Naive thymus-derived CD4-positive, alpha-beta T cell (primary cell): ENCODE measurements at regions of chr6 and their contacts with region 1.

Region 1: DNA sequence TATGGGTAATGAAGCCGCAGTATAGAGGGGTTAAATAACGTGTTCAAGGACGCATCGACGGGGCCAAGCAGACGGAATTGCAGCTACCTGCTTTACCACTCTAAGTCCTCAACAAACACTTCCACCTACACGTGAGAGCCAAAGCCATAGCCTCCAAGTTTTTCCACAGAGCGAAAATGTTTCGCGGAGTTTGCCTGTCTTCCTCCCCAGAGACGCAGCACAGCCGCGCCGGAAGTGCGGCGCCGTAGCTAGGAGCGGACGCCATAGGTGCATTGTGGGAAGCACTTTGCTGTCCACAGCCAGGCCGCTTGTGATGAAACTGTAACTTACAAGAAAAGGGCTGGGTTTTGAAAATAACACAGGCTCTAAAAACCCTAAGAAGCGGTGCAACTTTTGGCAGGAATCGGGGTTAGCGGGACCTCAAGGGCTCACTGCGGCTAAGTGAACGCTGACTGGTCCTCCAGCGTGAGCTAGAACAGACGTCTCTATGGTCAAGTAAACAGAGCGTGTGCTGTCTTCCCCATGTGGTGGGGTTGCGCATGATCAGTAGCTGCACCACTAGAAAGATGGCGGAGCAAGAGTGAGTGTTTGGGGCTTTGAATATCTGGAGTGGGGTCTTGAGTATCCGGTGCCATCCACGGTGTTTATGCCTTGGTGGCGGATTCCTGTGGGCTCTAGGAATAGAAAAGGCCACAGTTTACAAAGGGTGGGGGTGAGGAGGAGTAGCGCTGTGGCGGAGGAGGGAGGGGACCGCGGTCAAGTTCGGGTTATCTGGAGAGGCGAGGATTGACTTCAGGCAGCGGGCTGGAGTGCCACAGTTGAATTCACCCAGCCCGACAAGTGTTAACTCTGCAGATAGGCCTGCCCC is at the start of gene RPL7L1:
- DNase-seq: peak; percentile 70 to 93 (median 88)
- ATAC-seq: peak; percentile 95
- H3K4me3 ChIP-seq: peak within 1 kb of the TSS; percentile 82
- H3K4me3 Mint-ChIP-seq: peak within 1 kb of the TSS; percentile 93 to 99 (median 96)
- H3K27ac ChIP-seq: peak within 1 kb of the TSS; percentile 89
- H3K27ac Mint-ChIP-seq: peak within 1 kb of the TSS; percentile 98 to 100 (median 99)
- H3K4me1 ChIP-seq: peaks cover 5 to 7% of the 10 kb centered on the region in 2 donors
- H3K4me1 Mint-ChIP-seq: peaks cover 7 to 40% (median 29%) of the 10 kb centered on the region in 7 donors
- H3K27me3 ChIP-seq: no peaks in the 10 kb centered on the region
- H3K27me3 Mint-ChIP-seq: no peaks in the 10 kb centered on the region
- total RNA-seq, gene RPL7L1: 65.6 to 91.7 (median 78.1) TPM

Region 2: GRCh38 chr6:42118162-42119001 is 761.2 kb before region 1 on chr6:
- CTCF ChIA-PET with region 1: no interaction called
- POLR2A ChIA-PET with region 1: no interaction called
- intact Hi-C with region 1: no loop called
- DNase-seq: no peak
- ATAC-seq: no peak
- H3K4me3 ChIP-seq: no peak overlapping the region
- H3K4me3 Mint-ChIP-seq: no peak overlapping the region
- H3K27ac ChIP-seq: no peak overlapping the region
- H3K27ac Mint-ChIP-seq: no peak overlapping the region
- H3K4me1 ChIP-seq: no peaks in the 10 kb centered on the region
- H3K4me1 Mint-ChIP-seq: peaks cover 0 to 2% (median 0%) of the 10 kb centered on the region in 7 donors
- H3K27me3 ChIP-seq: no peaks in the 10 kb centered on the region
- H3K27me3 Mint-ChIP-seq: peaks cover 4 to 10% (median 6%) of the 10 kb centered on the region in 5 donors

Region 3: DNA sequence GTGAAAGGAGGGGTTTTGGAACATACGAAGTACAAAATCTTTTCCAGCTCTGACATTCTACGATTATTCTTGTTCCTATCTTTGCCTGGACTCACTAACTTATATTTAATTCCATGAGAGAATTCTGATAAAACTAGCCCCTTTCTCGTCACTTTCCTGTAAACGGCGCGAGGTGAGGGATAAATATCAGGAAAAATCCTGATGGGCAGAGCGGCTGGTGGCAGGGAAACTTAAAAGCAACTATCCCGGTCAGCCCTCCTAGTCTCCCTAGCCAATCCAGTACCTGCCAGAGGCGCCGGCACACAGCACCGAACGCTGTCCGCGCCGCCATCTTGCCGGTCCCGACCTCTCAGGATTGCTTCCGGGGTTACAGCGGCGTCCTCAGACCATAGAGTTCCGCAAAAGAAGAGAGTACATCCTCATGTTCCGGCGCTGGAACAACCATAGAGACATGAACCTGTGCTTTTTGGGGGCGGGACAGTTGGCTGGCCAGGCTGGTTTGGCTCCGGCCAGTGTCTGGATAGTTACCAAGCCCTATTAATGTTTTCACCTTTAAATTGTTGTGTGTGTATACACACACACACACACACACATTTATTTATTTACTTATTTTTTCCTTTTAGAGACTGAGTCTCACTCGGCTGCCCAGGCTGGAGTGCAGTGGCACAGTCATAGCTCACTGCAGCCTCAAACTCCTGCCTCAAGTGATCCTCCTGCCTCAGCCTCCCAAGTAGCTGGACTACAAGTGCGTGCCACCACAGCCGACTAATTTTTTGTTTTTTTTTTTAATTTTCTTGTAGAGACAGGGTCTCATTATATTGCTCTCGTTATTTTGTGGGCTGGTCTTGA is 661.9 kb before region 1 on chr6 and contains the start of gene MRPS10:
- CTCF ChIA-PET with region 1: no interaction called
- POLR2A ChIA-PET with region 1: no interaction called
- intact Hi-C with region 1: loop called in 1 of 2 experiments (anchors 1 kb)
- DNase-seq: peak; percentile 72 to 92 (median 87)
- ATAC-seq: peak; percentile 100
- H3K4me3 ChIP-seq: peak within 1 kb of the TSS; percentile 96
- H3K4me3 Mint-ChIP-seq: peak within 1 kb of the TSS; percentile 92 to 100 (median 98)
- H3K27ac ChIP-seq: peak within 1 kb of the TSS; percentile 77
- H3K27ac Mint-ChIP-seq: peak within 1 kb of the TSS; percentile 87 to 99 (median 97)
- H3K4me1 ChIP-seq: peaks cover 9 to 14% of the 10 kb centered on the region in 2 donors
- H3K4me1 Mint-ChIP-seq: peaks cover 7 to 34% (median 24%) of the 10 kb centered on the region in 7 donors
- H3K27me3 ChIP-seq: no peaks in the 10 kb centered on the region
- H3K27me3 Mint-ChIP-seq: no peaks in the 10 kb centered on the region
- total RNA-seq, gene MRPS10: 17.0 to 30.3 (median 25.3) TPM

Region 4: DNA sequence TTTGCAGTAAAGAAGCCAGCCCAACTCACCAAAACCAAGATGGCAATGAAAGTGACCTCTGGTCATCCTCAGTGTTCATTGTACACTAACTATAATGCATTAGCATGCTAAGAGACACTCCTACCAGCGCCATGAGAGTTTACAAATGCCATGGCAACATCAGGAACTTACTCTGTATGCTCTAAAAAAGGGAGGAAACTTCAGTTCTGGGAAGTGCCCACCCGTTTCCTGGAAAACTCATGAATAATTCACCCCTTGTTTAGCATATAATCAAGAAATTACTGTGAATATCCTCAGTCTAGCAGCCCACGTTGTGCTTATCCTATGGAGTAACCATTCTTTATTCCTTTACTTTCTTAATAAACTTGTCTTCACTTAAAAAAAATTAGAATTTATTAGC is 408.5 kb before region 1 on chr6:
- CTCF ChIA-PET with region 1: no interaction called
- POLR2A ChIA-PET with region 1: no interaction called
- intact Hi-C with region 1: no loop called
- DNase-seq: no peak
- ATAC-seq: no peak
- H3K4me3 ChIP-seq: no peak overlapping the region
- H3K4me3 Mint-ChIP-seq: no peak overlapping the region
- H3K27ac ChIP-seq: no peak overlapping the region
- H3K27ac Mint-ChIP-seq: peak overlapping the region in 1 of 9 donors; percentile 21
- H3K4me1 ChIP-seq: no peaks in the 10 kb centered on the region
- H3K4me1 Mint-ChIP-seq: peaks cover 0 to 10% (median 0%) of the 10 kb centered on the region in 7 donors
- H3K27me3 ChIP-seq: no peaks in the 10 kb centered on the region
- H3K27me3 Mint-ChIP-seq: peaks cover 0 to 6% (median 0%) of the 10 kb centered on the region in 5 donors

Region 5: GRCh38 chr6:42692137-42692911 is 187.3 kb before region 1 on chr6:
- CTCF ChIA-PET with region 1: no interaction called
- POLR2A ChIA-PET with region 1: interaction called, 9 read pairs
- intact Hi-C with region 1: loop called in 1 of 2 experiments (anchors 1 kb)
- DNase-seq: no peak
- ATAC-seq: no peak
- H3K4me3 ChIP-seq: no peak overlapping the region
- H3K4me3 Mint-ChIP-seq: no peak overlapping the region
- H3K27ac ChIP-seq: no peak overlapping the region
- H3K27ac Mint-ChIP-seq: peak overlapping the region; percentile 39 to 87 (median 77)
- H3K4me1 ChIP-seq: peaks cover 10 to 16% of the 10 kb centered on the region in 2 donors
- H3K4me1 Mint-ChIP-seq: peaks cover 19 to 60% (median 40%) of the 10 kb centered on the region in 7 donors
- H3K27me3 ChIP-seq: no peaks in the 10 kb centered on the region
- H3K27me3 Mint-ChIP-seq: no peaks in the 10 kb centered on the region

Region 6: DNA sequence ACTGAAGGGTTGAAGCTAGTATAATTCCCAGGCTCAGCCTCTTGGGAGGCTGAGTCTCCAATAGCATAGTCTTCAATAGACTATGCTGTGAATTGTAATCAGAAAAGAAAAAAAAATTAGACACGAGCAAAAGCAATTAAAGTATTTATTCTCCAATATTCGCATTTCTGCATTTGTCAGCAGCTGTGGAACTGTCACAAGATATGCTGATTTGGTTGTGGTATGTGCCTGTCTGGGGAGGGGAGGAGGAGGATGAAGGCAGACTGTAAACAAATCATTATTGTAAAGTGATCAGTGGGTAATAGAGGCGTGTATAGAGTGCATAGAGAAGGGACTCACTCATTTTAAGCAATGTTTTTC is 107.9 kb before region 1 on chr6:
- CTCF ChIA-PET with region 1: no interaction called
- POLR2A ChIA-PET with region 1: interaction called, 49 read pairs
- intact Hi-C with region 1: loop called (anchors 1 kb)
- DNase-seq: peak in 1 of 9 donors; percentile 63
- ATAC-seq: peak; percentile 35
- H3K4me3 ChIP-seq: peak overlapping the region; percentile 50
- H3K4me3 Mint-ChIP-seq: peak overlapping the region; percentile 67 to 91 (median 84)
- H3K27ac ChIP-seq: peak overlapping the region; percentile 91
- H3K27ac Mint-ChIP-seq: peak overlapping the region; percentile 99 to 100 (median 100)
- H3K4me1 ChIP-seq: peaks cover 67 to 72% of the 10 kb centered on the region in 2 donors
- H3K4me1 Mint-ChIP-seq: peaks cover 49 to 86% (median 75%) of the 10 kb centered on the region in 7 donors
- H3K27me3 ChIP-seq: no peaks in the 10 kb centered on the region
- H3K27me3 Mint-ChIP-seq: no peaks in the 10 kb centered on the region

Region 7: GRCh38 chr6:42890311-42891198 is 10.9 kb after region 1 on chr6:
- CTCF ChIA-PET with region 1: interaction called, 6 read pairs
- POLR2A ChIA-PET with region 1: interaction called, 101 read pairs
- intact Hi-C with region 1: loop called (anchors 1 kb)
- DNase-seq: peak; percentile 70 to 90 (median 87)
- ATAC-seq: peak; percentile 99
- H3K4me3 ChIP-seq: peak overlapping the region; percentile 89
- H3K4me3 Mint-ChIP-seq: peak overlapping the region; percentile 94 to 100 (median 98)
- H3K27ac ChIP-seq: peak overlapping the region; percentile 87
- H3K27ac Mint-ChIP-seq: peak overlapping the region; percentile 89 to 99 (median 98)
- H3K4me1 ChIP-seq: peaks cover 0 to 8% of the 10 kb centered on the region in 2 donors
- H3K4me1 Mint-ChIP-seq: peaks cover 0 to 26% (median 14%) of the 10 kb centered on the region in 7 donors
- H3K27me3 ChIP-seq: no peaks in the 10 kb centered on the region
- H3K27me3 Mint-ChIP-seq: no peaks in the 10 kb centered on the region